Breast epithelium (tissue), 4 donors: ENCODE measurements at regions of chr15 and their contacts with region 1.

Region 1: GRCh38 chr15:101014921-101015841 is 96.0 kb downstream of the LRRK1 start:
- DNase-seq: peak; percentile 40 to 77
- H3K4me3 ChIP-seq: no peak overlapping the region
- H3K27ac ChIP-seq: no peak overlapping the region
- H3K4me1 ChIP-seq: no peaks in the 10 kb centered on the region
- H3K27me3 ChIP-seq: no peaks in the 10 kb centered on the region
- CTCF ChIP-seq: peak in 2 of 3 donors; percentile 80 to 83
- POLR2A ChIP-seq: no peak

Region 2: DNA sequence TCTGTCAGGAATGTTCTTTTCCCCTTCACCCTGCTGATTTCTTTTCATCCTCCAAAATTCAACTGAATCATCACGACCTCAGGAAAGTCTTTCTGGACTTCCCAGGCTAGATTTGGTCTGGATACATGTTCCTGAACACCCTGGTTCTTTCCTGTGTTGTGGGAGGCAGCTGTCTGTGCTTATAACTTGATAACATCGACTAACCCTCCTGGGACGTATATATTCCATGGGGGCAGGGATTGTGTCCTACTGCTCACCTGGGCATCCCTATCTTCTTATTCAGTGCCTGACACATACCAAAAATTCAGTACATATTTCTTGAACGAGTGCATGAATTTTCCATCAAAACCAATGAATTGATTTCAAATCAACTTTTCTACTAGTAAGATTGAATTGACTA is 1497.0 kb before region 1 on chr15:
- intact Hi-C with region 1: loop called (anchors 5 kb)
- DNase-seq: no peak
- H3K4me3 ChIP-seq: no peak overlapping the region
- H3K27ac ChIP-seq: no peak overlapping the region
- H3K4me1 ChIP-seq: no peaks in the 10 kb centered on the region
- H3K27me3 ChIP-seq: no peaks in the 10 kb centered on the region
- CTCF ChIP-seq: no peak
- POLR2A ChIP-seq: no peak

Region 3: GRCh38 chr15:101723874-101724674 is 708.9 kb after region 1 on chr15 and contains the start of gene TARS3:
- intact Hi-C with region 1: no loop called
- DNase-seq: peak; percentile 89 to 94
- H3K4me3 ChIP-seq: peak within 1 kb of the TSS; percentile 86 to 96 (median 91)
- H3K27ac ChIP-seq: peak within 1 kb of the TSS; percentile 90 to 92
- H3K4me1 ChIP-seq: peaks cover 0 to 7% of the 10 kb centered on the region in 2 donors
- H3K27me3 ChIP-seq: no peaks in the 10 kb centered on the region
- CTCF ChIP-seq: peak in 1 of 3 donors; percentile 21
- POLR2A ChIP-seq: peak; percentile 27
- total RNA-seq, gene TARS3: 21.3 to 32.8 (median 25.3) TPM